H1 (cell line): ENCODE measurements at regions of chr1 and their contacts with region 1.

Region 1: GRCh38 chr1:243323491-243323890 is 67.7 kb downstream of the SDCCAG8 start:
- DNase-seq: no peak
- H3K4me3 ChIP-seq: no peak overlapping the region
- H3K27ac ChIP-seq: no peak overlapping the region
- H3K4me1 ChIP-seq: no peaks in the 10 kb centered on the region
- H3K27me3 ChIP-seq: no peaks in the 10 kb centered on the region
- CTCF ChIP-seq: no peak
- EP300 ChIP-seq: no peak
- POLR2A ChIP-seq: no peak
- RAD21 ChIP-seq: no peak

Region 2: DNA sequence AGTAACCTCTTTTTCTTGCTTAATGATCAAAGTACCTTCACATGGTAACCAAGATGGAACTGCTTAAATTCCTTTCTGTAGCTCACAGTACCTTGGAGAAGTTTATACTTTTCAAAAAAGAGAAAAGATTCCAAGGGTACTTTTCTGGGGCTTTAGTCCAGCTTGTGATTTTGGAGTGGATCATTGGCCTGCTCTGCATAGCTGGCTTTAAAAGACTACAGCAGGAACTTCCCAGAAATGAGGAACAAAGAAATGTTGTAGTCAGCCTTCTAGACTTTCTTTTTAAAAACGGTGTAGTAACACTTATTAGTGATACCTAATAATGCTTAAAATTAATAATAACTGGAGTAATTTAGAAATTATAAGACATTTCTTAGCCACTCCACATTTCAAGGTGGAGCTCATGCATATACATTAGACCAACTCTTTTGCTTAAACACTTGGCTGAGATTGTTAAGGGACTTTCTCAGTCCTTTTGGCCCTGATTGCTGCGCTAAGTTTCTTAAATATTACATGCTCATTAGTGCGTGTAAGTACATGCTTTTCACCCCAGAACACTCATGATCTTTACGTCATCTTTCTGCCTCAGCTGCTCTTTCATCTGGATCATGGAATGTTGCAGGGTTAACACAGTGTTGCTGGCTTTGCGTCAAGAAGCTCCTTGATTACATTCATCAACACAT is 10.4 kb before region 1 on chr1:
- CTCF ChIA-PET with region 1: interaction called, 12 read pairs
- POLR2A ChIA-PET with region 1: no interaction called
- DNase-seq: no peak
- H3K4me3 ChIP-seq: no peak overlapping the region
- H3K27ac ChIP-seq: no peak overlapping the region
- H3K4me1 ChIP-seq: peaks cover 0 to 4% (median 1%) of the 10 kb centered on the region in 4 experiments; a peak in 3 of 7 replicates
- H3K27me3 ChIP-seq: no peaks in the 10 kb centered on the region
- CTCF ChIP-seq: no peak
- EP300 ChIP-seq: no peak
- POLR2A ChIP-seq: no peak
- RAD21 ChIP-seq: no peak

Region 3: GRCh38 chr1:243364866-243365265 is 41.4 kb after region 1 on chr1:
- CTCF ChIA-PET with region 1: no interaction called
- POLR2A ChIA-PET with region 1: no interaction called
- DNase-seq: no peak
- H3K4me3 ChIP-seq: no peak overlapping the region
- H3K27ac ChIP-seq: no peak overlapping the region
- H3K4me1 ChIP-seq: no peaks in the 10 kb centered on the region
- H3K27me3 ChIP-seq: no peaks in the 10 kb centered on the region
- CTCF ChIP-seq: no peak
- EP300 ChIP-seq: no peak
- POLR2A ChIP-seq: no peak
- RAD21 ChIP-seq: no peak